ENCODE measurements at regions of chr14 and their contacts with region 1.

Region 1: DNA sequence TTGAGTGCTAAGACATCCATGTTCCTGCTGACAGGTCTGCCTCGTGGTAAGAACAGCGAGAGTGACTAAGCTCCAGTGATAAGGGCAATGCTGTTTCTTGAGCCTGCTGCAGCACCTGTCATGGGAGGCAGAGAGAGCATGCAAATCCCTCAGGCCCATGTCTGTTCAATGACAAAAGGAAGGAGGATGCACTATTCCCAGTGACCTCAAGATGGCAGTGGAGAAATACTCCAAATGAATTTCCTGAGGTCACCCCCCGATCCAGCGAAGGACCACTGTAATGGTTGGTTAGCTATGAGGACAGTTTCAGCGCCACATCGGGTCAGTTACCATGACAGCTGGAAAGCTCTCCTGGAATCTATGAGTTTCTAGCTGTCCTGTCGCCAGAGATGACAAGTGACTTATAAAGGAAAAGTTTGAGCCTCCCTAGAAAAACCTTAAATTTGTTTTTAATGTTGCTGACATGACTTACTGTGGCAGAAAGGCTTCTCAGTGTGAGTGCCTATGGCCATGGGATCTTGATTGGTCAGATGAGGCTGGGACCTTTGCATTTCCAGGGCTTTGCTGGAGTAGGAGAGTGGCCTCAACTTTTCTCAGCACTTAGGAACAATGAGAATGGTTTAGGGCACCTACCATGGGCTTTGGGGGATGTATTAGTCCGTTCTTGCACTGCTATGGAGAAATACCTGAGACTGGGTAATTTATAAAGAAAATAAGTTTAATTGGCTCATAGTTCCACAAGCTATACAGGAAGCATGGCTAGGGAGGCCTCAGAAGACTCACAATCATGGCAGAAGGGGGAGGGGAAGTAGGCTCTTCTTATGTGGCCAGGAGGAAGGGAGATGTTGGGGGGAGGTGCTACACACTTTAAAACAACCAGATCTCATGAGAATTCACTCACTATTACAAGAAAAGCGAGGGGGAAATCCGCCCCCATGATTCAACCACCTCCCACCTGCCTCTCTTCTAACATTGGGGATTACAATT is 88.0 kb upstream of the TMEM260 start:
- DNase-seq: peak; percentile 11
- H3K4me3 ChIP-seq: no peak overlapping the region
- H3K27ac ChIP-seq: no peak overlapping the region
- H3K4me1 ChIP-seq: peaks cover 0 to 5% (median 2%) of the 10 kb centered on the region in 4 donors
- H3K27me3 ChIP-seq: no peaks in the 10 kb centered on the region
- CTCF ChIP-seq: peak; percentile 48 to 79 (median 66)
- EP300 ChIP-seq: no peak
- POLR2A ChIP-seq: no peak

Region 2: DNA sequence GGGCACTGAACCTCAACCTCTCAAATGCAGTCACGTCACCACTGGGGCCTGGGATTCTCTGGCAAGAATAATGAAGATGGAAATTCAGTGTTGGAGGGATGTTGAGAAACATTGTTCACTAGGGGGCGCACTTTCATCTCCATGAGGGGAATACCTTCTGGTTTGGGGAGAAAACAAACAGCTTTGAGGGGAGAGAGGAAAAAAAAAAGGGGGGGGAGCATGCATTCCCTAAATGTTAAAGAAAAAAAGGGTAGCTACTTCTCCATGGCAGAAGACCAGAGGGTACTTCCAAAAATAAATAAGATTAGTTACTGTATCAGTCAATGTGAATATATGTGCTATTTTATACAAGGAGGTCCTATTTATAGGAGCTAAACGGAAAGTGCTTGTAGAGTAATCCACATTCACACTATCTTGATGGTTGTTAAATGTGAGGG is 1045.4 kb before region 1 on chr14:
- in situ Hi-C with region 1: loop called (anchors 25 kb)
- intact Hi-C with region 1: no loop called
- DNase-seq: peak; percentile 60
- H3K4me3 ChIP-seq: no peak overlapping the region
- H3K27ac ChIP-seq: no peak overlapping the region
- H3K4me1 ChIP-seq: peaks cover 6 to 45% (median 12%) of the 10 kb centered on the region in 4 donors
- H3K27me3 ChIP-seq: no peaks in the 10 kb centered on the region
- CTCF ChIP-seq: peak; percentile 67 to 71 (median 70)
- EP300 ChIP-seq: no peak
- POLR2A ChIP-seq: no peak

Region 3: GRCh38 chr14:55454264-55455002 is 1037.2 kb before region 1 on chr14:
- in situ Hi-C with region 1: loop called (anchors 25 kb)
- intact Hi-C with region 1: no loop called
- DNase-seq: peak; percentile 68
- H3K4me3 ChIP-seq: peak overlapping the region in 1 of 4 donors; percentile 14
- H3K27ac ChIP-seq: peak overlapping the region; percentile 73 to 81 (median 78)
- H3K4me1 ChIP-seq: peaks cover 5 to 57% (median 20%) of the 10 kb centered on the region in 4 donors
- H3K27me3 ChIP-seq: no peaks in the 10 kb centered on the region
- CTCF ChIP-seq: no peak
- EP300 ChIP-seq: no peak
- POLR2A ChIP-seq: no peak

Region 4: GRCh38 chr14:55707365-55707804 is 784.2 kb before region 1 on chr14:
- in situ Hi-C with region 1: loop called in 1 of 4 experiments (anchors 10 kb)
- intact Hi-C with region 1: no loop called
- DNase-seq: no peak
- H3K4me3 ChIP-seq: no peak overlapping the region
- H3K27ac ChIP-seq: no peak overlapping the region
- H3K4me1 ChIP-seq: peaks cover 0 to 10% (median 2%) of the 10 kb centered on the region in 4 donors
- H3K27me3 ChIP-seq: no peaks in the 10 kb centered on the region
- CTCF ChIP-seq: peak; percentile 55 to 77 (median 64)
- EP300 ChIP-seq: no peak
- POLR2A ChIP-seq: no peak

Region 5: DNA sequence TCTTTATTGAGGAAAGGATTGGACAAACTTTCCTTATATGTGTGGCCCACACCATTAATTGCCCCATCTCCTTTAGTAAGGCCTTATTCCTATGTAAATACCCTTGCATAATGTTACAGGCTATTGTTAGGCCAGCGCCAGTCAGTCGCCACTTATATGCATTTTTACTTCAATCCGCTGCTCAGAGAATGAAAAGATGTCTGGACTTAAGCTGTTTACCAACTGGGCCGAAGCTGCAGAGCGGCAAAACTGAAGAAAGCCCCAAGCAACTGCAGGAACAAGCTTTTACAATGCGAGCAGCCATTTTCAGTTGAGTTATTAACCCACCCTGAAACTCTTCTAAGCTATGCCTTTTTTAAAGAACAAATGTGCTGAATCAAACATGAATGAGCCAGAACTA is 410.8 kb after region 1 on chr14:
- in situ Hi-C with region 1: no loop called
- intact Hi-C with region 1: no loop called
- DNase-seq: no peak
- H3K4me3 ChIP-seq: no peak overlapping the region
- H3K27ac ChIP-seq: no peak overlapping the region
- H3K4me1 ChIP-seq: no peaks in the 10 kb centered on the region
- H3K27me3 ChIP-seq: no peaks in the 10 kb centered on the region
- CTCF ChIP-seq: no peak
- EP300 ChIP-seq: no peak
- POLR2A ChIP-seq: no peak

Region 6: GRCh38 chr14:57182760-57183503 is 691.3 kb after region 1 on chr14:
- in situ Hi-C with region 1: loop called in 1 of 4 experiments (anchors 25 kb)
- intact Hi-C with region 1: no loop called
- DNase-seq: no peak
- H3K4me3 ChIP-seq: no peak overlapping the region
- H3K27ac ChIP-seq: no peak overlapping the region
- H3K4me1 ChIP-seq: no peaks in the 10 kb centered on the region
- H3K27me3 ChIP-seq: peaks cover 5% of the 10 kb centered on the region
- CTCF ChIP-seq: no peak
- EP300 ChIP-seq: no peak
- POLR2A ChIP-seq: no peak

Region 7: GRCh38 chr14:57317316-57317715 is 825.7 kb after region 1 on chr14:
- in situ Hi-C with region 1: loop called (anchors 10 to 25 kb)
- intact Hi-C with region 1: loop called (anchors 5 kb)
- DNase-seq: peak; percentile 72
- H3K4me3 ChIP-seq: no peak overlapping the region
- H3K27ac ChIP-seq: no peak overlapping the region
- H3K4me1 ChIP-seq: no peaks in the 10 kb centered on the region
- H3K27me3 ChIP-seq: peaks cover 12% of the 10 kb centered on the region
- CTCF ChIP-seq: peak; percentile 66 to 87 (median 78)
- EP300 ChIP-seq: no peak
- POLR2A ChIP-seq: no peak